GM12878 (cell line): ENCODE measurements at regions of chr6 and their contacts with region 1.

Region 1: DNA sequence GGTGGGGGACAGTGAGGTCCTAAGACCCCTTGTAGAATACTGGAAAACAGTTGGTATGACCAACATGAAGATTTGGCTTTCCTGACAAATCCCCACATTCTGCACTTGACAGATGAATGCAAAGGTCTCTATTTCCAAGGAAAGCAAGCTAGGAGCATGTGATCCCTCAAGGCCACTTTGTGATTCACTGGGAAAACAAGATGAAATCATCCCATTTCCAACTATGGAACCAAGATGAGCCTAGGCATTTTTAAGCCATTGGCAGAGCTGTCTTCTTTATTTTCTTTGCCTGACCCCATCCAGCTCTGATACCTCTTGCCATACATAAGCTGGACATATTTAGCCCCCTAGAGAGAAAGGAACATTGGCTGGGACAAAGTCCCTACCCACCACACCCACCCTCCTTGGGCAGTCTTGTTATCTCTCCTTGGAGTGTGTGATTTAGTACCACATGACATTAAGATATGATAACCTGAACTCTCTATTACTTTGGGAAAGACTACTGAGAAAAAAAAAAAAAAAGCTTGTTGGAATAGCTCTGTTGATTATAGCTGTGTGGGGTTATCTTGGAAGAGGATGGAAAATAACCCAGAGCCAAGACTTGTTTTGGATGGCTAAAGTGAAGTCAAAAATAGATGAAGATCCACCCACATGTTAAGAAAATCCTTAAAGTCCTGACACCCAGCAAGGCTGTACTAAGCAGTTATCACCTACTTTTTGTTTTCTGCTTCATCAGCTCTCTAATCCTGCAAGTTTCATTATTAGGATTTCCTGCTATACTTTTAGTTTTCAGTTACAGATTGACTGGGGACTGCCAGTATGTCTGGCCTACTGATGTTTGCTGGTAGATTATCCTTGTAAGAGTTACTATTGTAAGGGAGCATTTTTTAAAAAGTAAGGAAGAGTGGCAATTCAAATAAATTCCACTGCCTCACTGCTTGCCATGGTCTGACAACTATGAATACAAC is 90.1 kb upstream of the PREP start:
- DNase-seq: no peak
- ATAC-seq: peak; percentile 83
- H3K4me3 ChIP-seq: no peak overlapping the region
- H3K27ac ChIP-seq: peak overlapping the region; percentile 27
- H3K4me1 ChIP-seq: peaks cover 47% of the 10 kb centered on the region
- H3K27me3 ChIP-seq: no peaks in the 10 kb centered on the region
- CTCF ChIP-seq: no peak
- EP300 ChIP-seq: no peak; a peak in 1 of 4 replicates
- POLR2A ChIP-seq: no peak
- RAD21 ChIP-seq: no peak

Region 2: DNA sequence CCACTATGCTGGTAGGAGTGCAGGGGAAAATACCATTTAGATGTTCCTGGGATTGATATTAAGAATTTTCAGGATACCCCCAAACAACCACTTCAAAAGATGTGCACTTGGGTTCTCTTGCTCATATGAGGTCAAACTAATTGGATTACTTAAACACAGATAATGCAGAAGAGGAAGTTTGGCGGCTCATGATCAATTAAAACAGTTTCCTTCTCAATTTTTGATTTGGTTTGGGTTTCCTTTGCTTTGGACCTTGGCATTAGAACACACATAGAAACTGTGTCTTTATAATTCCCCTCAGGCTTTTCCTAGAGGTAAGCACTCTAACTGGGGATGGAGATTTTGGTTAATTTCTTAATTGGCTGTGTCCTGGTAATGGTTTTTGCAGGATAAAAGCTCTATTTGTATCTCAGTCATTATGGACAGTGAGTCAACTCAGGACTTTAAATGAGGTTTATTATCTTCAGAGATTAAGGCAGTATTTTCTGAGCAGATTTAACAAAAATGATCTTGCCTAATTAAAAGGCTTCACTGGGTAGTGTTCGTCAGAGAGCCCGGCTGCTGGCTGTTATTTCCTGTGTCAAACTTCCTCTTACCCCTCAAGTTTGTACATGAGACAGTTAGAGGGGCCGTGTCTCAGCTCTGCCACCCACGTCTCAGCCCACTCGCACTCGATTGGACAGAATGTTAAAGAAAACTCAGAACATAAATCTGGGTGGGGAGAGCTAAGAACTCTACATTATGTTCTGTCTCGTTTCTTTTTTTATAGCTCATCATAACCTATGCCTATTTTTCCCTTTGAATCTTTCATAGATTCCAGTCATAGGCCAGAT is 39.9 kb before region 1 on chr6:
- CTCF ChIA-PET with region 1: interaction called, 11 read pairs
- POLR2A ChIA-PET with region 1: interaction called, 8 read pairs
- RAD21 ChIA-PET with region 1: interaction called, 184 read pairs
- SMC1A ChIA-PET with region 1: interaction called, 95 read pairs
- in situ Hi-C with region 1: no loop called
- intact Hi-C with region 1: no loop called
- DNase-seq: peak; percentile 54
- ATAC-seq: peak; percentile 89
- H3K4me3 ChIP-seq: no peak overlapping the region
- H3K27ac ChIP-seq: peak overlapping the region; percentile 35
- H3K4me1 ChIP-seq: peaks cover 15% of the 10 kb centered on the region
- H3K27me3 ChIP-seq: no peaks in the 10 kb centered on the region
- CTCF ChIP-seq: no peak
- EP300 ChIP-seq: peak; percentile 49 to 63; a peak in 3 of 4 replicates
- POLR2A ChIP-seq: no peak
- RAD21 ChIP-seq: no peak

Region 3: DNA sequence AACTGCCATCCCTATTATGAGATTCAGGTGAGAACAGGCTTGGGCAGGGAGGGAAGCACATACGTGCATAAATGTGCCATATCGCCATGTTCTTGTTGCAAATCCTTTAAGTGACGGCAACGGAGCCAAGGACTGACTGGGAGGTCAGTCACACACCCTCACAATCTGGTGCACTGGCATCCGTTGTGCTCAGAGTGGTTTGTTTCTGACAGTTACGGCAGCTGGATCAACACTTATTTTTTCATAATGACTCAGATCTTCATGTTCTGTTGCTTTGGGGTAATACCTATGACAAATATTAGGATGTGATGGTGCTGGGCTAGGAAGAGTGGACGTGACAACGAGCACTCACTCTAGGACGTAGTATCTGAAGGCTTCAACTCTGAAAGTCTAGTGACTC is 33.9 kb before region 1 on chr6:
- CTCF ChIA-PET with region 1: interaction called, 11 read pairs
- POLR2A ChIA-PET with region 1: interaction called, 8 read pairs
- RAD21 ChIA-PET with region 1: interaction called, 184 read pairs
- SMC1A ChIA-PET with region 1: interaction called, 95 read pairs
- in situ Hi-C with region 1: no loop called
- intact Hi-C with region 1: no loop called
- DNase-seq: peak; percentile 98
- ATAC-seq: peak; percentile 91
- H3K4me3 ChIP-seq: no peak overlapping the region
- H3K27ac ChIP-seq: peak overlapping the region; percentile 88
- H3K4me1 ChIP-seq: peaks cover 16% of the 10 kb centered on the region
- H3K27me3 ChIP-seq: no peaks in the 10 kb centered on the region
- CTCF ChIP-seq: no peak
- EP300 ChIP-seq: peak; percentile 99 to 100
- POLR2A ChIP-seq: peak; percentile 80
- RAD21 ChIP-seq: no peak

Region 4: DNA sequence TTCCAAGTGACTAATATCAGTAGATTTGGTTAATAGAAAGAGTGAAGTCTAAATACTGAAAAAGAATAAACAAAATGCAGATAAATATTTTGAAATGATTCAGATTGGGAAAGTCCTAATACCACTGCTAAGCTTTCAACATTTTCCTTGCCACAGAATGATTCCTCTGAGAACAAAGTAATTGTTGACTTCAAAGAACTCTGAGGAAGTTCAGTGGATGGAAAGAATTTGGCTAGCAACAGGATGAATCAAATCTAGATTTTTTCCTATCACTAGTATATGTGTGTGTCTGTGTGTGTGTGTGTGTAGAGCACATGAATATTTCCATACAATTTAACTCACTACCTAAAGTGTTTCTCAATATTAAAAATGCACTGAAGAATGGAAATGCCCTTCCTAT is 17.8 kb after region 1 on chr6:
- CTCF ChIA-PET with region 1: interaction called, 4 read pairs
- POLR2A ChIA-PET with region 1: no interaction called
- RAD21 ChIA-PET with region 1: interaction called, 4 read pairs
- SMC1A ChIA-PET with region 1: interaction called, 11 read pairs
- in situ Hi-C with region 1: no loop called
- intact Hi-C with region 1: no loop called
- DNase-seq: no peak
- ATAC-seq: no peak
- H3K4me3 ChIP-seq: no peak overlapping the region
- H3K27ac ChIP-seq: no peak overlapping the region
- H3K4me1 ChIP-seq: no peaks in the 10 kb centered on the region
- H3K27me3 ChIP-seq: no peaks in the 10 kb centered on the region; a peak in 1 of 4 replicates
- CTCF ChIP-seq: no peak
- EP300 ChIP-seq: no peak
- POLR2A ChIP-seq: no peak
- RAD21 ChIP-seq: no peak

Region 5: GRCh38 chr6:105601541-105602236 is 108.7 kb after region 1 on chr6:
- CTCF ChIA-PET with region 1: interaction called, 4 read pairs
- POLR2A ChIA-PET with region 1: no interaction called
- RAD21 ChIA-PET with region 1: interaction called, 11 read pairs
- SMC1A ChIA-PET with region 1: interaction called, 18 read pairs
- in situ Hi-C with region 1: no loop called
- intact Hi-C with region 1: no loop called
- DNase-seq: peak; percentile 99
- ATAC-seq: peak; percentile 92
- H3K4me3 ChIP-seq: peak overlapping the region; percentile 53; the same call in 1 of the 2 replicates
- H3K27ac ChIP-seq: peak overlapping the region; percentile 86
- H3K4me1 ChIP-seq: peaks cover 24% of the 10 kb centered on the region
- H3K27me3 ChIP-seq: no peaks in the 10 kb centered on the region
- CTCF ChIP-seq: no peak
- EP300 ChIP-seq: peak; percentile 59 to 86; a peak in 3 of 4 replicates
- POLR2A ChIP-seq: peak; percentile 50
- RAD21 ChIP-seq: peak; percentile 12; the same call in 1 of the 2 replicates